Endothelial cell of umbilical vein (primary cell): ENCODE measurements at regions of chr4 and their contacts with region 1.

Region 1: GRCh38 chr4:88007304-88008121 is at the start of gene PKD2:
- DNase-seq: peak; percentile 73
- H3K4me3 ChIP-seq: peak within 1 kb of the TSS; percentile 66 to 89 (median 88)
- H3K27ac ChIP-seq: peak within 1 kb of the TSS; percentile 68
- H3K4me1 ChIP-seq: peaks cover 23% of the 10 kb centered on the region
- H3K27me3 ChIP-seq: no peaks in the 10 kb centered on the region
- CTCF ChIP-seq: no peak
- POLR2A ChIP-seq: peak; percentile 82
- total RNA-seq, gene PKD2: 27.0 and 33.5 TPM in 2 replicates

Region 2: GRCh38 chr4:87985097-87985886 is 22.2 kb before region 1 on chr4:
- CTCF ChIA-PET with region 1: interaction called, 11 read pairs
- POLR2A ChIA-PET with region 1: no interaction called
- dilution Hi-C with region 1: no loop called
- intact Hi-C with region 1: no loop called
- DNase-seq: peak; percentile 66
- H3K4me3 ChIP-seq: no peak overlapping the region
- H3K27ac ChIP-seq: no peak overlapping the region
- H3K4me1 ChIP-seq: no peaks in the 10 kb centered on the region
- H3K27me3 ChIP-seq: peaks cover 2 to 3% of the 10 kb centered on the region in 2 experiments
- CTCF ChIP-seq: peak; percentile 63 to 79
- POLR2A ChIP-seq: no peak

Region 3: GRCh38 chr4:88017516-88018297 is 10.2 kb after region 1 on chr4:
- CTCF ChIA-PET with region 1: no interaction called
- POLR2A ChIA-PET with region 1: interaction called, 3 read pairs
- dilution Hi-C with region 1: no loop called
- intact Hi-C with region 1: loop called (anchors 1 kb)
- DNase-seq: peak; percentile 94
- H3K4me3 ChIP-seq: no peak overlapping the region
- H3K27ac ChIP-seq: peak overlapping the region; percentile 88
- H3K4me1 ChIP-seq: peaks cover 21% of the 10 kb centered on the region
- H3K27me3 ChIP-seq: no peaks in the 10 kb centered on the region
- CTCF ChIP-seq: no peak
- POLR2A ChIP-seq: no peak